ENCODE measurements at regions of chr3 and their contacts with region 1.

Region 1: DNA sequence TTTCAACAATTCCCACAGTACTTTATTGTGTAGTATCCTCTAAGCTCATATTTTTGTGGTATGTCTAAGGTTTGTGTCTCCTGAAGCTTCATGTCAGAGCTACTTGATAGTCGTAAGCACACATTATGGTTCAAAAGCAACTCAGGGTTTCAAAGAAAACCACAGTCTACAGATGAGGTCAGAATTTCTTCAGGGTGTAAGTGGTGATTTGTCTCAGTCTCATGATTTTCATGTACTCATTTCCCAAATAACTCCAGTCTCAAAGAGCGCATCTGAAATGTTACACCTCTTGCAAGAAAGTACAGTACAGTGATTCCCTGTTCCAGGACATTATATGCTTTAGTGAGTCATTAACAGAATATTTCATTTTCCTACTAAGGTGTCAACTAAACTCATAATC is 47.5 kb upstream of the SSR3 start:
- DNase-seq: no peak

Region 2: DNA sequence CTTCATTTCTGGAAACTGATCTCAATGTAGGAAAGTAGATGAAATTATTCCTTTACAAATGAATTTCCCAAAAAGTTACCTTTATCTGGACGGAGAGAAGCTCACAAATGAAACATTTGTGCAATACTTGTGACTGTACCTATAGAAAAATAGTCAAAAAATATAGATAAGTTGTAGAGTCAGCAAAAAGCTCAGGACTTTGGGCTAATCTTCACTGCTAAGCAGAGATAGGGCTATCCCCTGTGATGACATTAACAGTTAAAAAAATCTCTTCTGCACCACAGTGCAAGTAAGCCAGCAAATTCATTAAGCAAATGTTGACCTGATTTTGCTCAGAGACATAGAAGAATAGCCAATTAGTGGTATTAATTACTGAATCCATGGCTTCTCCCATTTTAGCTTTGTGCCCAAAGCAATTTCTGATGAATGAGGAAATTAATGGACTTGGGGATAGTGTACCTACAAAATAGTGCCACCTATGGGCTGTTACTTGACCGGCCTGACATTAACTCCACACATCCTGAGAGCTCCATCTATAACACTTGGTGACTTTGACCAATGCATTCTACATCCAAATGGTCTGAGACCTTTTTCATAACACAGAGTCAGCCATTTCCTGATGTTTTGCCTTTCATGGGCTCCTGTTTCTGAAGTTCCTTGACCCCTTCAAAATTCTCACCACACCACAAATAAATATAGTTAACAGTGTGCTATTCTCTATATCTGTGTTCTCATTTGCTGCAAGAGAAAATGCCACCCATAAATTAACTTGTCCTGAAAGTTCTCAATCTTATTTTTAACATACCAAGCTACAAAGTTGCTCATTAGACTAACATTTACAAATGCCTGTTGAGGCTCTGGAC is 152.5 kb before region 1 on chr3:
- intact Hi-C with region 1: no loop called
- DNase-seq: no peak

Region 3: DNA sequence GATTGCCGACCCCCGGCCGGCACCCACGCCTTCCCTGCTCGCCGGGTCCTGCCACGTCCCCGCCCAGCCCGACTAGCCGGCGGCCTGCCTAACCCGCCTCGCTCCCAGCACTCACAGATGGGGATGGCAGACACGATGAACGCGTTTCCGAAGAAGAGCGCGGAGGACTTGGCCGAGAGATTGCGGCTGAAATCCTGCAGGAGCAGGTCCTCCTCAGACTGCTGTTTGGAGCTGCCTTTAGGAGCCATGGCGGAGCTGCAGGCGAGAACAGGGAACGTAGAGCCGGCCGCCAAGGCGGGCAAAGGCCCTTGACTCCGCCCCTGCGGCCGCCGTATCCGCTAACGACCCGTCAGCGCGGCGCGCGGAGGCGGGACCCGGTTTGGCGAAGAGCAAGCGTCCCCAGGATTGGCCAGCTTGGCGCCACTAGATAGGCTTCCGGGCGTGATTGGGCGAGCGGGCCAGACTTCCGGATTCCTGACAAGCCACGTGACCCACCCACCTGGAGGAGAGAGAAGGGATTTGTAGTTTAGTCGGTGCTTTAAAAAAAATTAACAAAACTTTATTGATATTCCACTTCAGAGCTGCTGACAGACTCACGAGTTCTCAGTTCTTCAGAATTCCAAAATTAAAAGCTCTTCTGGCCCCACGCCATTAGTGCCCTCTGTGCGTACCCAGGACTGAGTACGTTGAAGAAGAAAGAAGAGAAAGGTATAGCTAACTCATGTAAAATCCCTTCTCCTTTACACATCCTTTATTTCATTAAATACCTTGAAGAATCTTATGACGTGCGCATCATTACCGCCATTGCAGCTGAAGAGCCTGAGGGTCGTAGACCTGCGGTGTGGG is 47.4 kb before region 1 on chr3 and contains the start of gene SSR3:
- intact Hi-C with region 1: loop called in 1 of 2 experiments (anchors 1 kb)
- DNase-seq: peak; percentile 100
- total RNA-seq, gene SSR3: 150 to 171 TPM

Region 4: DNA sequence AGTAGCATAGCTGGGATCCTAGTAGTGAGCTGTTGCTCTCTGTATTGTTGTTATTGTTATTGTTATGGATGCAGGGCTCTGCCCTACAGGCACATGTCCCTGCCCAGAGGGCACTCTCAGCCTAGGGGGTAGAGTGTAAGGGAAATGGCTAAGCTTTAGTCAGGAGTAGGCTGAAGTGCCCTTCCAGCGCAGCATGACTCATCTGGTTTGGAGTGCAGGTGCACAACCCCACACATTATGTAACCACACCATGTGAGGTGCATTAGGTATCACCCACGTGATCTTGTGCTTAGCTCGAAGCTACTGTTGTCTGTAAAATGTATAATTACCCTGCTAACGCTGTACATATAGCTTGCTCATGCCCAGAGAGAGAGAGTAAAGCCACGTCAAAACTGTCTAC is 23.7 kb after region 1 on chr3:
- intact Hi-C with region 1: no loop called
- DNase-seq: no peak